ENCODE measurements at regions of chr14 and their contacts with region 1.

Region 1: DNA sequence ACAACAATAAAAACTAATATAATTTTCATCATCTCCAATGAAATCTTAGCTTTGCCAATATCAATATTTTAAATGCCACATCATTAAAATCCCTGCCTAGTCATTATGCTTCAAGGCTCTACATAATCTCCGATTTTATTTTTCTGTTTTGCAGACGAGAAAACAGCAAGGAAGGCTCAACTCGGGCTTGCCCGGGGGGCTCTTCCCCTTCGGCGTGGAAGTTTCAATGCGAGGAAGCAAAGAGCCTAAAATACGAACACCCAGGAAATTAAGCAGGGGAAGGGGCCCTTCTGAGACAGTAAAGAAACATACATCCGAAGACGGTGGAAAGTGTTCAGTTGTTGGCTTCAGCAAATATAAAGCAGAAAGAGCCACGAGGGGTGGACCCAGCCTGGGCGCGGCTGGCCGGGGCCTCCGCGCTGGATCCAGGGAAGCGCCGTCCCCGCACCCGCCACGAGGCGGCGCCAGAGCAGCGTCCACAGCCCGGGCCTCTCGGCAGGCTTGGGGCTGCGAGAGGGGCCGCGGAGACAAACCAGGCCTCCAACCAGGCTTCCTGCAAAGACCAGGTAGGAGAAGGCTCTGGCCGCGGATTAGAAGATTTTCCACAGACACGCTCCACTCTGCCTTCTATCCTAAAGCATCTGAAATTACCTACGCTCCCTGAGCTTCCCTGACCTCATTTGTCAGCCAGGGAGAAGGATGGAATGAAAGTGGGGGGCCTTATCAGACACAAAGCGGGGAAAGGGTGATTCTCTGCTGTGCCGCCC is 77.2 kb downstream of the SERPINA3 start:
- DNase-seq: no peak
- H3K4me3 ChIP-seq: no peak overlapping the region; the same call in 1 of the 2 replicates
- H3K27ac ChIP-seq: no peak overlapping the region
- H3K27me3 ChIP-seq: no peaks in the 10 kb centered on the region
- CTCF ChIP-seq: peak; percentile 95

Region 2: DNA sequence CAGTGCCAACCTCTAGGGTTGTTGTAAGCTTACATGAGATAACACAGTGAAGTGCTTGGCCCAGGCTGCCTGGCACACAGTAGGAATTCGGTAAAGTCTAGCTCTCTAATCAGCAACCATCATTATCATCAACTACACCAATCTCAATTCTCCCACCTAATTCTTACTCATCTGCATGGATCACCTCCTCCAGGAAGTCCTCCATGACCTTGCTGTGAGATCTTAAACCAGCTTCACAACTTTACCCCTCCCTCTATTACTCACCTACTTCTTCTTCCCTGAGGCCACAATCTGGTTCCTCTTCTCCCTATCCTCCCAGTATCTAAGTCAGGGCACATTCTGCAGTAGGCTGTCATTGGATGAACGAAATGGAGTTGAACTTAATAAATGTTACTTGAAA is 13.2 kb after region 1 on chr14:
- CTCF ChIA-PET with region 1: interaction called, 14 read pairs
- POLR2A ChIA-PET with region 1: no interaction called
- DNase-seq: no peak
- H3K4me3 ChIP-seq: no peak overlapping the region
- H3K27ac ChIP-seq: no peak overlapping the region
- H3K27me3 ChIP-seq: peaks cover 9% of the 10 kb centered on the region
- CTCF ChIP-seq: no peak

Region 3: GRCh38 chr14:95098984-95099599 is 409.7 kb after region 1 on chr14:
- CTCF ChIA-PET with region 1: interaction called, 10 read pairs
- POLR2A ChIA-PET with region 1: no interaction called
- DNase-seq: peak; percentile 7
- H3K4me3 ChIP-seq: no peak overlapping the region
- H3K27ac ChIP-seq: no peak overlapping the region
- H3K27me3 ChIP-seq: no peaks in the 10 kb centered on the region
- CTCF ChIP-seq: peak; percentile 65

Region 4: GRCh38 chr14:95431199-95432143 is 742.1 kb after region 1 on chr14:
- CTCF ChIA-PET with region 1: interaction called, 14 read pairs
- POLR2A ChIA-PET with region 1: no interaction called
- DNase-seq: no peak
- H3K4me3 ChIP-seq: no peak overlapping the region
- H3K27ac ChIP-seq: no peak overlapping the region
- H3K27me3 ChIP-seq: no peaks in the 10 kb centered on the region
- CTCF ChIP-seq: peak; percentile 48

Measured in AG04450 (cell line).